Colonic mucosa (tissue), 4 donors: ENCODE measurements at regions of chr17 and their contacts with region 1.

Region 1: DNA sequence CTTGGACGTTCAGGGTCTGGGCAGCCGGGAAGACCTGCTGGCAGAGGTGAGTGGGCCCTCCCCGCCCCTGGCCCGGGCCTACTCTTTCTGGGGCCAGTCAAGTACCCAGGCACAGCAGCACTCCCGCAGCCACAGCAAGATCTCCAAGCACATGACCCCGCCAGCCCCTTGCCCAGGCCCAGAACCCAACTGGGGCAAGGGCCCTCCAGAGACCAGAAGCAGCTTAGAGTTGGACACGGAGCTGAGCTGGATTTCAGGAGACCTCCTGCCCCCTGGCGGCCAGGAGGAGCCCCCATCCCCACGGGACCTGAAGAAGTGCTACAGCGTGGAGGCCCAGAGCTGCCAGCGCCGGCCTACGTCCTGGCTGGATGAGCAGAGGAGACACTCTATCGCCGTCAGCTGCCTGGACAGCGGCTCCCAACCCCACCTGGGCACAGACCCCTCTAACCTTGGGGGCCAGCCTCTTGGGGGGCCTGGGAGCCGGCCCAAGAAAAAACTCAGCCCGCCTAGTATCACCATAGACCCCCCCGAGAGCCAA is 8.6 kb upstream of the ABCC3 start:
- DNase-seq: peak; percentile 58
- H3K4me3 ChIP-seq: no peak overlapping the region
- H3K27ac ChIP-seq: no peak overlapping the region
- H3K4me1 ChIP-seq: peaks cover 19% of the 10 kb centered on the region
- H3K27me3 ChIP-seq: no peaks in the 10 kb centered on the region
- CTCF ChIP-seq: peak; percentile 64

Region 2: DNA sequence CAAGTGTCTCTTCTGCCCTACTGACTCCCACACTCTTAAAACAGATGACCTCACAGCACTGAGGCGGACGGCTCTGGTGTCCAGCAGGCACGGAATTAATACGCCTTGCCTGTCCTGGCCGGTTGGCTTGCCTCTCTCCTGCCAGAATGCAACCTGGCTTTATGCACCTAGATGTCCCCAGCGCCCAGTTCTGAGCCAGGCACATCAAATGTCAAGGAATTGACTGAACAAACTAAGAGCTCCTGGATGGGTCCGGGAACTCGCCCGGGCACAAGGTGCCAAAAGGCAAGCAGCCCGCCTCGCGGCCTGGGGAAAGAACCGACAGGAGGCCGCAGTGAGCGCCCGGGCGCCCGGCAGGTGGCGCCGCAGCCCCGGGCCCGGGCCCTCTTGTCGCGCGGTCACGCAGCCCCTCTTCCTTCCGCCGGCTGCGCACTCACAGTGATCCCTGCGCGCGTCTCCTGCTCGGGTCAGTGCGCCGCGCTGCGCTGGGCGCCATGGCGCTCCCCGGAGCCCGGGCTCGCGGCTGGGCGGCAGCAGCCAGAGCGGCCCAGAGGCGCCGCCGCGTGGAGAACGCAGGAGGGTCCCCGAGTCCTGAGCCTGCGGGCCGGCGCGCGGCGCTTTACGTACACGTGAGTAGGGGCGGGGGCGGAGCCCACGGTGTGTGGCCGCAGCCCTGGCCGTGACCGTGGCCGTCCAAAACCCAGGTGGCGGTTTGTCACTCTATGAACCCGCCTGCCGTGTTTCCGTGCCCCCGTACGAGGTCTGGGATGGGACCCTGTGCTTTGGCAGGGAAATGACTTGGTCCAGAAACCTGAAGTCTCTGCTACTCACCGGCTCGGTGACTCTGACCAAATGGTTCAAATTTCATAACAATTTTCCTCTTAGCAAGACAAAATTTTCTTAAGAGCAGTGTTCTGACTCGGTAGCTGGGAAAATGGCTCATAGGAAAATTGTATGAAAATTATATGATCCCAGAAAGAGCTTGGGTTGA is 147.4 kb before region 1 on chr17 and contains the start of gene RSAD1:
- intact Hi-C with region 1: loop called (anchors 10 kb)
- DNase-seq: peak; percentile 83
- H3K4me3 ChIP-seq: peak within 1 kb of the TSS; percentile 82
- H3K27ac ChIP-seq: peak within 1 kb of the TSS; percentile 89
- H3K4me1 ChIP-seq: peaks cover 7% of the 10 kb centered on the region
- H3K27me3 ChIP-seq: no peaks in the 10 kb centered on the region
- CTCF ChIP-seq: peak; percentile 89
- total RNA-seq, gene RSAD1: 22.2 to 29.3 TPM

Region 3: DNA sequence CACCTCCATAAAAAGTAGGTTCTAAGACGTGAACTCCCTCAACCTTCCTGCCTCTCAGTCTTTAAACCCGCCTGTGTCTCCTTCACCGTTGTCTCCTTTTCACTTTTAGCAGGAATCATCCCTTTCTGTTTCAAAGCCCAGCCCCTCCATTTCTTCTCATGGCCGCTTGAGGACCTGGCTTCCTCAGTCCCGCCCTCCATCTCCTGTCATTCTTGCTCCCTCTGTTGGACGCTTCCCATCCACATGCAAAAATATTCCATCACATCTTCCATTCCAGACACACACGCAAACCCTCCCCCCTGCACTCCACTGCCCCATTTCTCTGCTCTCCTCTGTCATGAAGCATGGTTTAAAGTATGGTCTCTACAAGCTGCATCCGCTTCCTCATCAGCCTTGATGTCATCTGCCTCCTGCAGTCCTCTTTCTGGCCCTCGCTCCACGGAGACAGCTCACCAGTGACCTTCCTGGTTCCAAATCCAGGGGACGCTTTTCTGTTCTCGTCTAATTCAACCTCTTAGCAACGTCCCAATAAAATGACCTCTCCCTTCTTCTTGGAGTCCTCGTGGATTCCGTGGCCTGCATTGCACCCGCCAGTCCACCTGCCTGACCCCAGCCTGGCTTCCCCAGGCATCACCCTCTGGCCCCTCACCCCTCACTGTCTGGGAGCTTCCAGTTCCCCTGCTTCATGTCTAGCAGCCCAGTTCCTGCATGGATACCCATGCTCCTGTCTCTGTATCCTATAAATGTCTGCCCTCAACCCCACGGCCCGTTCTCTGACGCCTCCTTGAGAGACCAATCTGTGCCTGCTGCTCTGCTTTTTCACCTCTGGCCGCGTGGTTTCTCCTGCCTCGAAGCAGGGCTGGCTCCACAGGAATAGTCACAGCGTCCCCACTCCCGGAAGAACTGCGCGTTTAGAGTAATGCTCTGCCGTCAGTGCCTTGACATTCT is 55.4 kb after region 1 on chr17:
- intact Hi-C with region 1: loop called (anchors 5 kb)
- DNase-seq: peak; percentile 66
- H3K4me3 ChIP-seq: no peak overlapping the region
- H3K27ac ChIP-seq: peak overlapping the region; percentile 33
- H3K4me1 ChIP-seq: peaks cover 20% of the 10 kb centered on the region
- H3K27me3 ChIP-seq: no peaks in the 10 kb centered on the region
- CTCF ChIP-seq: no peak

Region 4: DNA sequence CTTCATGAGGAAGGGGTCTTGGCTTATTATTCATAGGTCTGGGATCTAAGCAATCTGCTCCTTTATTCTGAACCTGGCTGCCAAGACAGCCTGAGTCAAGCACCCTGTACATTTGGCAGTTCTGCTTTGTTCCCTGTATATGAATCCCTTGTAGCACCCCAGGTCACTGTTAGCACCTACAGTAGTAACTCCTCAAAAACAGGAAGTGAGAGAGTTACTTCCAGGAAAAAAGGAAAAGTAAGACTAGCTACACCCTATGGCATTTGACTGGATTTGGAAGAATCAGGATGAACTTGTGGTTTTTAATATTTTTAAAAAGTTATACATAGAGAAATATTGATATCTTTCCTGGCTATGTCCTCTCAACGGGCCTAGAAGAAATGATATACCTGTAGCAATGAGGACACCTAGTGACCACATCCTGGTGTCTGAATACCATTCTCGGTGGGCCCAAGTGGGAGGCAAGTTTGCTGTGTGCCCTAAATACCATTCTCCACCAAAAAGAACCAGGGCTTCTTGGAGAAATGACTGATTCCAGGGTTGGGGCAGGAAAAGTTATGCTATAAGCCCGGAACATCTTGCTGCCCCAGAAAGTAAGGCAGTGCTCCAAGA is 71.7 kb after region 1 on chr17:
- intact Hi-C with region 1: loop called (anchors 5 kb)
- DNase-seq: no peak
- H3K4me3 ChIP-seq: no peak overlapping the region
- H3K27ac ChIP-seq: no peak overlapping the region
- H3K4me1 ChIP-seq: no peaks in the 10 kb centered on the region
- H3K27me3 ChIP-seq: no peaks in the 10 kb centered on the region
- CTCF ChIP-seq: no peak